Calu3 (cell line): ENCODE measurements at regions of chr5 and their contacts with region 1.

Region 1: GRCh38 chr5:87069974-87070624 is 197.6 kb upstream of the RASA1 start:
- DNase-seq: peak; percentile 74
- H3K4me3 Mint-ChIP-seq: peak overlapping the region; percentile 9
- H3K27ac Mint-ChIP-seq: peak overlapping the region; percentile 75
- H3K4me1 Mint-ChIP-seq: peaks cover 33% of the 10 kb centered on the region
- H3K27me3 Mint-ChIP-seq: no peaks in the 10 kb centered on the region
- CTCF ChIP-seq: peak; percentile 58

Region 2: GRCh38 chr5:86979811-86980411 is 90.2 kb before region 1 on chr5:
- CTCF ChIA-PET with region 1: no interaction called
- intact Hi-C with region 1: no loop called
- DNase-seq: peak; percentile 39
- H3K4me3 Mint-ChIP-seq: peak overlapping the region; percentile 62
- H3K27ac Mint-ChIP-seq: peak overlapping the region; percentile 86
- H3K4me1 Mint-ChIP-seq: peaks cover 61% of the 10 kb centered on the region
- H3K27me3 Mint-ChIP-seq: no peaks in the 10 kb centered on the region
- CTCF ChIP-seq: no peak

Region 3: GRCh38 chr5:87099246-87099925 is 29.3 kb after region 1 on chr5:
- CTCF ChIA-PET with region 1: interaction called, 9 read pairs
- intact Hi-C with region 1: loop called (anchors 1 kb)
- DNase-seq: no peak
- H3K4me3 Mint-ChIP-seq: no peak overlapping the region
- H3K27ac Mint-ChIP-seq: peak overlapping the region; percentile 93
- H3K4me1 Mint-ChIP-seq: peaks cover 64% of the 10 kb centered on the region
- H3K27me3 Mint-ChIP-seq: no peaks in the 10 kb centered on the region
- CTCF ChIP-seq: no peak

Region 4: DNA sequence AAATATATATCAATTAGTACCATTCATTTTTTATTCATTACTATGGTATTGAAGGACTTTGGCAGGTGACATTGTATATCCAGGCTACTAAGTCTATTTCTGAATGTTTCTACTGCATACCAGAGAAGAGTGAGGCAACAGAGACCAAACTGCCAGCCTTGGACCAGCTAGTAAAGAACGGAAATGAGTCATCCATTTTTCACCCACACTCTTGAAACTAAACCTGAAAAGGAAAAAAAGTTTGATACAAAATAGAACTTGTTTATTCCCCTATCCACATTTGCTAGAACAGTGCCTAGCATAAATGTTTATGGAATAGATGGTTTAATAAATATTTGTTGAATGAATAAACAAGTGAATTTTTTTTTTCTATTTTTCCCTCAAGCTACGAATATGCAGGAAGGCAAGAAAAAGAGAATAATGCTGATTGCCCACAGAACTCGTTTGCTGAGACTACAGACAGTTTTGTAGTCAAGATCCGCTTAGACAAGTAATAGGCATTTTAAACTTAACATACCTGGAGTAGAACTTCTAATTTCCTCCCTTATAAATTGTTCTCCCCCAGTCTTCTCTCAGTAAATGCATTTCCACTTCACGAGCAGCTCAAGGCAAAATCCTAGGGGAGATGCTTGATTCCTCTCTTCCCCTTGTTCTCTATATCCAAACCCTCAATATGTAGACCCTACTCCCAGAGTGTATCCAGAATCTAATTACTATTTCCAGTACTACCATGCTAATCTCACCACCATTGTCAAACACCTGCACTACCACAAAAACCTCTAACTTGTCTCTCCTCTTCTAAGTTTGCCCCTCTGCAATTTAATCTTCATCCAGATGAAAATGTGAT is 51.4 kb after region 1 on chr5:
- CTCF ChIA-PET with region 1: interaction called, 9 read pairs
- intact Hi-C with region 1: loop called (anchors 1 kb)
- DNase-seq: peak; percentile 60
- H3K4me3 Mint-ChIP-seq: peak overlapping the region; percentile 25
- H3K27ac Mint-ChIP-seq: peak overlapping the region; percentile 89
- H3K4me1 Mint-ChIP-seq: peaks cover 56% of the 10 kb centered on the region
- H3K27me3 Mint-ChIP-seq: no peaks in the 10 kb centered on the region
- CTCF ChIP-seq: no peak

Region 5: GRCh38 chr5:87242239-87242798 is 172.2 kb after region 1 on chr5:
- CTCF ChIA-PET with region 1: no interaction called
- intact Hi-C with region 1: loop called (anchors 1 kb)
- DNase-seq: no peak
- H3K4me3 Mint-ChIP-seq: no peak overlapping the region
- H3K27ac Mint-ChIP-seq: peak overlapping the region; percentile 92
- H3K4me1 Mint-ChIP-seq: peaks cover 27% of the 10 kb centered on the region
- H3K27me3 Mint-ChIP-seq: no peaks in the 10 kb centered on the region
- CTCF ChIP-seq: no peak

Region 6: GRCh38 chr5:87400305-87400899 is 330.3 kb after region 1 on chr5:
- CTCF ChIA-PET with region 1: interaction called, 12 read pairs
- intact Hi-C with region 1: loop called (anchors 2 kb)
- DNase-seq: no peak
- H3K4me3 Mint-ChIP-seq: no peak overlapping the region
- H3K27ac Mint-ChIP-seq: no peak overlapping the region
- H3K4me1 Mint-ChIP-seq: peaks cover 15% of the 10 kb centered on the region
- H3K27me3 Mint-ChIP-seq: no peaks in the 10 kb centered on the region
- CTCF ChIP-seq: peak; percentile 55